ENCODE measurements at regions of chr4 and their contacts with region 1.

Region 1: GRCh38 chr4:4704267-4704666 is 155.2 kb upstream of the MSX1 start:
- DNase-seq: no peak
- H3K4me3 ChIP-seq: no peak overlapping the region
- H3K27ac ChIP-seq: no peak overlapping the region
- H3K4me1 ChIP-seq: no peaks in the 10 kb centered on the region
- H3K27me3 ChIP-seq: no peaks in the 10 kb centered on the region
- CTCF ChIP-seq: no peak
- POLR2A ChIP-seq: no peak

Region 2: DNA sequence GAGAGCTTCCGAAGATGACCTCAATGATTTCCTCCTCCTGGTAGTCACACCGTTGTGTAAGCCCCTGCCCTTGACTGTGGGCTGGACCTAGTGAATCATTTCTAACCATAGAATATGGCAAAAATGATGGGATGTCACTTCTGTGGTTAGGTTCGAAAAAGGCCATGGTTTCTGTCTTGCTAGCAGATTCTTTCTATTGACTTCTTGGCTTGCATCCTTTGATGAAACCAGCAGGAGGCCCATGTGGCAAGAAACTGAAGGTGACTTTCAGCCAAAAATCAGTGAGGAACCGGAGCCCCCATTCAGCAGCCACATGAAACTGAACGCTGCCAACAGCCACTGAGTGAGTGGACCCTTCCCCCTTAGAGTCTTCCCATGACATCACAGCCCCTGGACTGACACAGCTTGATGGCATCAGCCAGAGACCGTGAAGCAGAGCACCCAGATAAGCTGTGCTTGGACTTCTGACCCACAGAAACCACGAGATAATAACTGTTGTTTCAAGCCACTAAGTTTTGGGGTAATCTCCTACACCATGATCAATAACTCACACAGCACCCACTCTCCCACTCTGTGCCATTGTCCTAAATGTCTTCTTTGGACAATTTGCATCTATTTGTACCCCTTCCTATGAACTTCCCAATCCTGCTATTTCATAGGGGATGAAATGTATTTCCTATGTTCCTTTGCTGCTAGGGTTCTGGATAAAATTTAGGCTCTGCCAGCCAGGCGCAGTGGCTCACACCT is 14.4 kb before region 1 on chr4:
- intact Hi-C with region 1: loop called (anchors 1 kb)
- DNase-seq: no peak
- H3K4me3 ChIP-seq: no peak overlapping the region
- H3K27ac ChIP-seq: no peak overlapping the region
- H3K4me1 ChIP-seq: no peaks in the 10 kb centered on the region
- H3K27me3 ChIP-seq: no peaks in the 10 kb centered on the region
- CTCF ChIP-seq: no peak
- POLR2A ChIP-seq: no peak

Region 3: GRCh38 chr4:5142726-5143125 is 438.5 kb after region 1 on chr4:
- intact Hi-C with region 1: no loop called
- DNase-seq: no peak
- H3K4me3 ChIP-seq: no peak overlapping the region
- H3K27ac ChIP-seq: no peak overlapping the region
- H3K4me1 ChIP-seq: no peaks in the 10 kb centered on the region
- H3K27me3 ChIP-seq: no peaks in the 10 kb centered on the region
- CTCF ChIP-seq: peak in 2 of 3 donors; percentile 21 to 54
- POLR2A ChIP-seq: no peak

Measured in breast epithelium (tissue), 4 donors.